Lower leg skin (tissue), 4 donors: ENCODE measurements at regions of chr12 and their contacts with region 1.

Region 1: GRCh38 chr12:90978117-90978770 is 23.3 kb upstream of the CCER1 start:
- DNase-seq: no peak
- H3K4me3 ChIP-seq: no peak overlapping the region
- CTCF ChIP-seq: peak in 1 of 3 donors; percentile 56
- POLR2A ChIP-seq: no peak

Region 2: DNA sequence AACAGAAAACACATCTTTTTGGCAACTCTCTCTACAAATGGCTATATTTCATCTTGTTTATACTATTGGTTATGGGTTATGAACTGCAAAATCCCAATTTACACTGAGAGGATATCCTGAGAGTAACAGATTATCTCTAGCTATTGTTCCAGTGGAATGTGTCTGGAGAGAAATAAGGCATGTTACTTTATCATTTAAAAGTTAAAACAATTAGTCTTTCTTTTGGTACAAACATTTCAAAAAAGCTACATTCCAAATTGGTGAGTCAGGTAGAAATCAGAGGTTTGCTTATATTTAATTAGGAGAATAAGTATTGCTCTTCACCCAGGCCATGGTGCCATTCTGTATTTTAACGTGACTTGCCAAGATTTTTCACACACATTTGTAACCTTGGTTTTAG is 434.9 kb before region 1 on chr12:
- intact Hi-C with region 1: no loop called
- DNase-seq: no peak
- H3K4me3 ChIP-seq: no peak overlapping the region
- CTCF ChIP-seq: no peak
- POLR2A ChIP-seq: no peak

Region 3: DNA sequence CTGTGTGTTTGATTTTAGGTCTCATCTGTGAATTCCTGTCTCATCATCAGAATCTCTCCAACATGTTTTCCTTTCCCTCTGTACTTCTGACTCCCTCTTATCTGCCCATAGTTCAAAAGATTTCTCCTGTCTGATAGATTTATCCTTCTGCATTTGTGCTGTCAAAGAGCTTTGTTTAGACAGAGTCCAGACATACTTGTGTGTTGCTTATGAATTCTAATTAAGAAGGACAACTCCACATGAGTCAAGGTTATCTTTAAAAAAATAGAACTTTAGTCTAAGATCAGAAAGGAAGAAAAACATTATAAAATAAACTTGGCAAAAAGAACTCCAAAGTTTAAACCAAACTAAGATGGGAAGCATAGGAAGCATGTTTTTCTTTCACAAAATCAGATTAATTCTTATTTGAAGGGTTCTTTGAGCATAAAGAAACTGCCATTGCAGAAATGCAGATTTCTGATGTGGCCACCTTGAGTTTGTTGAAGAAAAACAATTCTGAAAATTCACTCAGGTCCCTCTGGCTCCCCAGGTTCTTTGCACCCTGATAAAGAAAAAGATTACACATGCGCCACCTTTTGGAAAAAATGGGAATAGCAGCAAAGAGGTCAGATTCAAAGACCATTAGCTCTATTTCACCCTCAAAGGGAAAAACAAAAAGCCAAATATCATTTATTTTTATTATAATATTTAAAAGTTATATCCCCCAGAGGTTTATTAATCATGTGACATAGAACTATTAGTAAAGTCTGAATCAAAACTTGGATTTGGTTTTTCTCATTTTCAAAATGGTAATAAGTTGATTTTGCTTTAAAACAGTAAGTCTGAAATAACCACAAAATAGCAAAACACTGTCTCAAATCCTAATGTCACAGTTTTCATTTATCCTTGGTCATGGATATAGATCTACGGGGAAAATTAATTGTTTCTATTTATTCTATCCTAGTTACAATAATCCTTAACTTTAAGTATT is 348.1 kb after region 1 on chr12:
- intact Hi-C with region 1: loop called (anchors 10 kb)
- DNase-seq: peak in 1 of 2 donors; percentile 81
- H3K4me3 ChIP-seq: no peak overlapping the region
- CTCF ChIP-seq: no peak
- POLR2A ChIP-seq: no peak

Region 4: GRCh38 chr12:91355150-91356006 is 377.1 kb after region 1 on chr12:
- intact Hi-C with region 1: loop called (anchors 10 kb)
- DNase-seq: peak; percentile 78 to 93
- H3K4me3 ChIP-seq: no peak overlapping the region
- CTCF ChIP-seq: peak in 1 of 3 donors; percentile 36
- POLR2A ChIP-seq: no peak